Activated B cell treated with CpG ODN at 0.5 μM for 24 hours (primary cell): ENCODE measurements at regions of chr15 and their contacts with region 1.

Region 1: GRCh38 chr15:40506964-40507571 is 36.3 kb downstream of the CHST14 start:
- DNase-seq: peak; percentile 49
- ATAC-seq: peak; percentile 45
- H3K4me3 Mint-ChIP-seq: peak overlapping the region; percentile 51
- H3K27ac Mint-ChIP-seq: no peak overlapping the region
- H3K4me1 Mint-ChIP-seq: peaks cover 25% of the 10 kb centered on the region
- H3K27me3 Mint-ChIP-seq: peaks cover 37% of the 10 kb centered on the region
- CTCF ChIP-seq: no peak

Region 2: GRCh38 chr15:40266828-40267304 is 240.2 kb before region 1 on chr15:
- CTCF ChIA-PET with region 1: no interaction called
- POLR2A ChIA-PET with region 1: no interaction called
- intact Hi-C with region 1: no loop called
- DNase-seq: no peak
- ATAC-seq: no peak
- H3K4me3 Mint-ChIP-seq: no peak overlapping the region
- H3K27ac Mint-ChIP-seq: no peak overlapping the region
- H3K4me1 Mint-ChIP-seq: no peaks in the 10 kb centered on the region
- H3K27me3 Mint-ChIP-seq: no peaks in the 10 kb centered on the region
- CTCF ChIP-seq: no peak

Region 3: GRCh38 chr15:40344631-40345120 is 162.4 kb before region 1 on chr15:
- CTCF ChIA-PET with region 1: no interaction called
- POLR2A ChIA-PET with region 1: no interaction called
- intact Hi-C with region 1: loop called (anchors 1 kb)
- DNase-seq: peak; percentile 46
- ATAC-seq: peak; percentile 95
- H3K4me3 Mint-ChIP-seq: no peak overlapping the region
- H3K27ac Mint-ChIP-seq: no peak overlapping the region
- H3K4me1 Mint-ChIP-seq: no peaks in the 10 kb centered on the region
- H3K27me3 Mint-ChIP-seq: no peaks in the 10 kb centered on the region
- CTCF ChIP-seq: peak; percentile 16

Region 4: GRCh38 chr15:40470423-40471104 is 36.5 kb before region 1 on chr15 and contains the start of gene CHST14:
- CTCF ChIA-PET with region 1: no interaction called
- POLR2A ChIA-PET with region 1: no interaction called
- intact Hi-C with region 1: loop called (anchors 2 kb)
- DNase-seq: peak; percentile 69
- ATAC-seq: peak; percentile 91
- H3K4me3 Mint-ChIP-seq: peak within 1 kb of the TSS; percentile 88
- H3K27ac Mint-ChIP-seq: peak within 1 kb of the TSS; percentile 77
- H3K4me1 Mint-ChIP-seq: peaks cover 10% of the 10 kb centered on the region
- H3K27me3 Mint-ChIP-seq: no peaks in the 10 kb centered on the region
- CTCF ChIP-seq: no peak
- total RNA-seq, gene CHST14: 10.1 and 10.2 TPM in 2 replicates

Region 5: DNA sequence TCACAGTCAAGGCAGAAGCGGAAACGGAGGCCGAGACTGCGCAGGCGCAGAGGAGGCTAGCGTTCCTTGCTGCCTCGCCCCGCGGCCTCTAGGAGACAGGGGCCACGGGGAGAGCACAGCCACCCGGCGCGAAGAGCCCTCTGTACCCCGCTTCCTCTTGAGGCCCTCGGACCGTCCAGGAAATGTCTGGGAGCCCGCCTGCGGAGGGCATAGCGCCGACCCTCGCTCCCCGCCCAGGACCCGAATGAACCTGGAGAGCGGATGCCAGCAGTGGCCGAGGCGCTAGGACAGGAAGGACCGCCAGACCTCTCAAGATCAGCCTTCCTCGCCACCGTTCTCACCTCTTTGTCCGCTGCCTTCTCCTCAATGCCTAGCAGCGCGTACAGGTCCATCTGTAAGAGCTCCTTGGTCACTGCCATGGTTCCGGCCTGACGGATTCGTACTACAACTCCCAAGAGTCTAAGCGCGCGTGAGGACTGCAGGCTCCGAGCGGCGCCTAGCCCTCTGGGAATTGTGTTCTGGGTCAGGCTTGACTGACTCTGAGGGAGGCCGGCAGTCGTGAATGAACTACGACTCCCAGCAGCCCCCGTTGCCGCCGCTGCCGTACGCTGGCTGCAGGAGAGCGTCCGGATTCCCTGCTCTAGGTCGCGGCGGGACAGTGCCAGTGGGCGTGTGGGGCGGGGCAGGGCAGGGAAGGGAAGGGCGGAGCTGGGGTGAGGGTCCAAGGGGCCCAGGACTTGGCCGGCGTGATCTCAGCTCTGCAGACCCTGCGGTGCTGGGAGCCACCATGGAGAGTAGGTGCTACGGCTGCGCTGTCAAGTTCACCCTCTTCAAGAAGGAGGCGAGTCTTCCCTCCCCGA is 300.2 kb after region 1 on chr15 and contains the starts of genes DNAJC17 and ZFYVE19:
- CTCF ChIA-PET with region 1: no interaction called
- POLR2A ChIA-PET with region 1: no interaction called
- intact Hi-C with region 1: no loop called
- DNase-seq: peak; percentile 87
- ATAC-seq: peak; percentile 96
- H3K4me3 Mint-ChIP-seq: peak within 1 kb of the TSS; percentile 99
- H3K27ac Mint-ChIP-seq: peak within 1 kb of the TSS; percentile 100
- H3K4me1 Mint-ChIP-seq: peaks cover 24% of the 10 kb centered on the region
- H3K27me3 Mint-ChIP-seq: no peaks in the 10 kb centered on the region
- CTCF ChIP-seq: no peak
- total RNA-seq, gene DNAJC17: 43.1 and 51.0 TPM in 2 replicates
- total RNA-seq, gene ZFYVE19: 23.2 and 25.2 TPM in 2 replicates